H1 (cell line): ENCODE measurements at regions of chr1 and their contacts with region 1.

Region 1: GRCh38 chr1:212899845-212900244 is 41.8 kb downstream of the FLVCR1 start:
- DNase-seq: no peak
- H3K4me3 ChIP-seq: no peak overlapping the region
- H3K27ac ChIP-seq: peak overlapping the region; percentile 8; the same call in 1 of the 2 replicates
- H3K4me1 ChIP-seq: peaks cover 3 to 9% (median 4%) of the 10 kb centered on the region in 4 experiments; a peak in 5 of 7 replicates
- H3K27me3 ChIP-seq: no peaks in the 10 kb centered on the region
- CTCF ChIP-seq: no peak
- EP300 ChIP-seq: no peak
- POLR2A ChIP-seq: no peak; a peak in 1 of 3 replicates
- RAD21 ChIP-seq: no peak

Region 2: GRCh38 chr1:212864201-212864600 is 35.6 kb before region 1 on chr1:
- CTCF ChIA-PET with region 1: no interaction called
- POLR2A ChIA-PET with region 1: interaction called, 67 read pairs
- DNase-seq: no peak
- H3K4me3 ChIP-seq: peak overlapping the region in 1 of 4 experiments; percentile 57; a peak in 1 of 8 replicates
- H3K27ac ChIP-seq: no peak overlapping the region
- H3K4me1 ChIP-seq: no peaks in the 10 kb centered on the region; a peak in 1 of 7 replicates
- H3K27me3 ChIP-seq: no peaks in the 10 kb centered on the region
- CTCF ChIP-seq: no peak
- EP300 ChIP-seq: no peak
- POLR2A ChIP-seq: no peak
- RAD21 ChIP-seq: no peak

Region 3: DNA sequence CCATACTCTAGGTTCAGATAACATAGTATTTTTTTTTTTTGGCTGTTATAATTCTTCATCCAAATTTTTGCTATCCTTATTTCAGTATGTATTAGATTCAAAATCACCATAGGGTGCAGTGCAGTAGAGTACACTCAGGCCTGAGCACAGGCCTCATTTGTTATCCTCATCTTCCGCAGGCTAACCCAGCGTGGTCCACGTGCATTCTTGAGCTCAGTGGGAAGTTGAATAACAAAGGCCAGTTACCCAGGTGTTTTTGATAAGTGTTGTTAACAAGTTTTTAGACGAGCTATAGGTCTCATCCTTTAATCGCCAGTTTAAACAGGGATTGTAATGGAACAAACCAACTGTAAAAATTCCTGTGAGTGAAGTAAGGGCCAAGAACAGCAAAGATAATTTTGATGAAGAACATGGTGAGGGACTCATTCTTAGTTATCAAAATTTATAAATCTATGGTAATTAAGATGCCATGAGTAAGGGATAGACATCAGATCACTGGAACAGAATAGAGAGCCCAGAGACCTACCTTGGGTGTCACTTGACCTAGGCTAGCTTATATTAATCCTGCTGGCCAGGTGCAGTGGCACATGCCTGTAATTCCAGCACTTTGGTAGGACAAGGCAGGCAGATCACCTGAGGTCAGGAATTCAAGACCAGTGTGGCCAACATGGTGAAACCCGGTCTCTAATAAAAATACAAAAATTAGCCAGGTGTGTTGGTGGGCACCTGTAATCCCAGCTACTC is 19.7 kb before region 1 on chr1:
- CTCF ChIA-PET with region 1: no interaction called
- POLR2A ChIA-PET with region 1: interaction called, 13 read pairs
- DNase-seq: no peak
- H3K4me3 ChIP-seq: no peak overlapping the region
- H3K27ac ChIP-seq: no peak overlapping the region
- H3K4me1 ChIP-seq: peaks cover 0 to 8% (median 1%) of the 10 kb centered on the region in 4 experiments; a peak in 4 of 7 replicates
- H3K27me3 ChIP-seq: no peaks in the 10 kb centered on the region
- CTCF ChIP-seq: no peak
- EP300 ChIP-seq: no peak
- POLR2A ChIP-seq: no peak
- RAD21 ChIP-seq: no peak; a peak in 1 of 4 replicates

Region 4: DNA sequence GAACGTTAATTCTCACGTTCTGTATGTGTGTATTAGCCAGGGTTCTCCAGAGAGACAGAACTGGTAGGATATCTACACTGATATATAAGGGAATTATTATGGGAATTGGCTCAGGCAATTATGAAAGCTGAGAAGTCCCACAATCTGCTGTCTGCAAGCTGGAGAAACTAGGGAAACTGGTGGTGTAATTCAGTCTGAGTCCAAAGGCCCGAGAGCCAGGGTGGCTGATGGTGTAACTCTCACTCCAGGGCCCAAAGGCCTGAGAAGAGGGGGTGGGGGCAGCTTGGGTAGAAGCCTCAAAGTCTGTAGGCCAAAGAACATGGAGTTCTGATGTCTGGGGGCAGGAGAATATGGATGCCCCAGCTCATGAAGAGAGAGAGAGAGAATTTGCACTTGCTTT is 37.2 kb after region 1 on chr1:
- CTCF ChIA-PET with region 1: no interaction called
- POLR2A ChIA-PET with region 1: no interaction called
- DNase-seq: no peak
- H3K4me3 ChIP-seq: no peak overlapping the region
- H3K27ac ChIP-seq: no peak overlapping the region
- H3K4me1 ChIP-seq: peaks cover 4 to 8% (median 6%) of the 10 kb centered on the region in 4 experiments; a peak in 6 of 7 replicates
- H3K27me3 ChIP-seq: peaks cover 0 to 2% (median 0%) of the 10 kb centered on the region in 4 experiments; a peak in 1 of 7 replicates
- CTCF ChIP-seq: no peak
- EP300 ChIP-seq: no peak
- POLR2A ChIP-seq: no peak
- RAD21 ChIP-seq: no peak

Region 5: GRCh38 chr1:213110349-213111300 is 210.8 kb after region 1 on chr1:
- CTCF ChIA-PET with region 1: no interaction called
- POLR2A ChIA-PET with region 1: no interaction called
- DNase-seq: no peak
- H3K4me3 ChIP-seq: no peak overlapping the region
- H3K27ac ChIP-seq: no peak overlapping the region
- H3K4me1 ChIP-seq: peaks cover 0 to 6% (median 0%) of the 10 kb centered on the region in 4 experiments; a peak in 1 of 7 replicates
- H3K27me3 ChIP-seq: no peaks in the 10 kb centered on the region
- CTCF ChIP-seq: no peak
- EP300 ChIP-seq: no peak
- POLR2A ChIP-seq: no peak
- RAD21 ChIP-seq: no peak